ENCODE measurements at regions of chr5 and their contacts with region 1.

Region 1: GRCh38 chr5:55172051-55172899 is 702 bp downstream of the CDC20B start:
- DNase-seq: peak; percentile 79
- H3K4me3 Mint-ChIP-seq: peak overlapping the region; percentile 81
- H3K27ac Mint-ChIP-seq: no peak overlapping the region
- H3K4me1 Mint-ChIP-seq: peaks cover 36% of the 10 kb centered on the region
- H3K27me3 Mint-ChIP-seq: peaks cover 48% of the 10 kb centered on the region

Region 2: GRCh38 chr5:55102348-55102747 is 69.9 kb before region 1 on chr5 and contains the start of gene GZMA:
- CTCF ChIA-PET with region 1: no interaction called
- intact Hi-C with region 1: loop called (anchors 2 kb)
- DNase-seq: peak; percentile 56
- H3K4me3 Mint-ChIP-seq: peak within 1 kb of the TSS; percentile 30
- H3K27ac Mint-ChIP-seq: no peak within 1 kb of the TSS
- H3K4me1 Mint-ChIP-seq: peaks cover 58% of the 10 kb centered on the region
- H3K27me3 Mint-ChIP-seq: peaks cover 9% of the 10 kb centered on the region
- total RNA-seq, gene GZMA: 0.24 TPM in 1 of 2 experiments, not detected in the other

Region 3: DNA sequence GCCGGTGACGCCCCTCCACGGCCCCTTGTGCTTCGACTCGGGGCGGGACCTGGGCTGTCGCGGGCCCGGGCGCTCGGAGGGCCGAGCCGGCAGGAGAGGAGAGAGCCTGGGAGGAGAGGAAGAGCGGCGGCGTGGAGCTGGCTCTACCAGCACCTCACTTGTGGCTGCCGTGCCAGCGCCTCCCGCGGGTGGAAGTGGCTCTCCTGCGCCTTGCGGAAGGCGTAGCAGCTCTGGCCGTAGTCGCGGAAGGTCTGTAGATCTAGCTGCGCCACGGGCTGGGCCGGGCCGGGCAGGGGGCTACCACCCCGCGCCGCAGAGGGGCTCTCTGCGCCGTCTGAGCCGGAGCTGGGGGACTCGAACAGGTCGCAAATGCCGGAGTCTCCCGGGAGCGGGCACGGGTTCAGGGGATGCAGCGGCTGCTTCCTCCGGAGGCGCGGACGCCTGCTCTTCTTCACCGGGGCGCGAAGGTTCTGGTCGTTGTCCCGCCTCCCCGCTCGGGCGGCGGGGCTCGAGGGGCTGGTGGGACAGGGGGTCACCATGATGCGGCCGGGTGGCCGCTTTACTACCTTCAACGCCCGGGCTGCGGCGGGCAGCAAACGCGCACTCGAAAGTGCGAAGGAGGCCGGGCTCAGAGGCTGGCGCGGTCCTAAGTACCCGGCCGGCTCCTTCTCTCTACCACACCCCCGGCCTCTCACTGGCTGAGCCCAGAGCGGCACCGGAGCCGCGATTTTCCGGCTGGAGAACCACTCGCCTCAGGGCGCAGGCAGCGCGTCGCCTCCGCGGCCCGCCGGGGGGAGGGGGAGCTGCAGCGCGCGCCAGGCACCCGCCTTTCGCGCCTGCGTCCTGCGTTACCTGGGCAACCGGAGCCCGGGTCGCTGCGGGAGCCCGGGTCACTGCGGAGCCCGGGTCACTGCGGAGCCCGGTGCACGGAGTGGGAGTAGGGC is 61.0 kb after region 1 on chr5 and contains the start of gene CCNO:
- CTCF ChIA-PET with region 1: interaction called, 10 read pairs
- intact Hi-C with region 1: loop called (anchors 1 kb)
- DNase-seq: peak; percentile 63
- H3K4me3 Mint-ChIP-seq: peak within 1 kb of the TSS; percentile 76
- H3K27ac Mint-ChIP-seq: no peak within 1 kb of the TSS
- H3K4me1 Mint-ChIP-seq: peaks cover 32% of the 10 kb centered on the region
- H3K27me3 Mint-ChIP-seq: peaks cover 69% of the 10 kb centered on the region
- total RNA-seq, gene CCNO: not detected

Region 4: GRCh38 chr5:55407059-55407684 is 234.9 kb after region 1 on chr5:
- CTCF ChIA-PET with region 1: no interaction called
- intact Hi-C with region 1: loop called (anchors 5 kb)
- DNase-seq: peak; percentile 25
- H3K4me3 Mint-ChIP-seq: no peak overlapping the region
- H3K27ac Mint-ChIP-seq: no peak overlapping the region
- H3K4me1 Mint-ChIP-seq: peaks cover 4% of the 10 kb centered on the region
- H3K27me3 Mint-ChIP-seq: no peaks in the 10 kb centered on the region

Region 5: DNA sequence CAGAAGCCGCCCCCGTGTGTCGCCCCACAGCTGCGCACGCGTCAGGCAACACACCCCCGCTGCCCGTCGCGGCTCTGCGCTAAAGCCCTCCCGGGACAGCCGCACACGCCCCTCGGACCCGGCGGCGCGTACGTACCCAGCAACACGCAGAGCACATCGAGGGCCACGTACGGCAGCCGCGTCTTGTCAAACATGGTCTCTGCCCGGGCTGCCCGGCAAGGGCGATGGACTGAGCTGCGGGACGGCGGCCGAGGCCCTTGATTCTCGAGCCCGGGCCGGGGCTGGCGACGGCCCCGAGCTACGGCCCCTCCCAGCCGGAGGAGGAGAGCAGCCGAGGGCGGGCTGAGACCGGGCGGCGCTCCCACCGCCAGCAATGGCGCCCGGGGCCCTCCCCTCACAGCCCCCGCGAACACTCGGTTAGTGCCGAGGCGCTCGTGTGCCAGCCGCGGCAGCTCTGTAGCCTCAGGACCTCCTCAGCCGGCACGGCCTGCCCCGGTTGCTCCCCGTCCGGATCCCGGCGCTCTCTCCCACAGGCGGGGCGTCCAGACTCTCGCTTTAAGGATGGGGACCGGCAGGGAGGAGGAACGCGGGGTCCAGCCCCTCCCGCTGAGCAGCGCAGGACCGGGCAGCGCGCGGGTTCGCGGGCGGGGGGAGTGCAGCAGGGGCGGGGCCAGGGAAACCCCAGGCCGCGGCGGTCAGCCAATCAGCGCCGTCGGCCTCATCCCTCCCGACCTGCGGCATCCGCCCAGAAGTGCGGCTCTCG is 362.3 kb after region 1 on chr5 and contains the start of gene PLPP1:
- CTCF ChIA-PET with region 1: no interaction called
- intact Hi-C with region 1: loop called (anchors 2 kb)
- DNase-seq: peak; percentile 83
- H3K4me3 Mint-ChIP-seq: peak within 1 kb of the TSS; percentile 82
- H3K27ac Mint-ChIP-seq: peak within 1 kb of the TSS; percentile 86
- H3K4me1 Mint-ChIP-seq: peaks cover 29% of the 10 kb centered on the region
- H3K27me3 Mint-ChIP-seq: no peaks in the 10 kb centered on the region
- total RNA-seq, gene PLPP1: 7.3 to 8.3 TPM

Region 6: DNA sequence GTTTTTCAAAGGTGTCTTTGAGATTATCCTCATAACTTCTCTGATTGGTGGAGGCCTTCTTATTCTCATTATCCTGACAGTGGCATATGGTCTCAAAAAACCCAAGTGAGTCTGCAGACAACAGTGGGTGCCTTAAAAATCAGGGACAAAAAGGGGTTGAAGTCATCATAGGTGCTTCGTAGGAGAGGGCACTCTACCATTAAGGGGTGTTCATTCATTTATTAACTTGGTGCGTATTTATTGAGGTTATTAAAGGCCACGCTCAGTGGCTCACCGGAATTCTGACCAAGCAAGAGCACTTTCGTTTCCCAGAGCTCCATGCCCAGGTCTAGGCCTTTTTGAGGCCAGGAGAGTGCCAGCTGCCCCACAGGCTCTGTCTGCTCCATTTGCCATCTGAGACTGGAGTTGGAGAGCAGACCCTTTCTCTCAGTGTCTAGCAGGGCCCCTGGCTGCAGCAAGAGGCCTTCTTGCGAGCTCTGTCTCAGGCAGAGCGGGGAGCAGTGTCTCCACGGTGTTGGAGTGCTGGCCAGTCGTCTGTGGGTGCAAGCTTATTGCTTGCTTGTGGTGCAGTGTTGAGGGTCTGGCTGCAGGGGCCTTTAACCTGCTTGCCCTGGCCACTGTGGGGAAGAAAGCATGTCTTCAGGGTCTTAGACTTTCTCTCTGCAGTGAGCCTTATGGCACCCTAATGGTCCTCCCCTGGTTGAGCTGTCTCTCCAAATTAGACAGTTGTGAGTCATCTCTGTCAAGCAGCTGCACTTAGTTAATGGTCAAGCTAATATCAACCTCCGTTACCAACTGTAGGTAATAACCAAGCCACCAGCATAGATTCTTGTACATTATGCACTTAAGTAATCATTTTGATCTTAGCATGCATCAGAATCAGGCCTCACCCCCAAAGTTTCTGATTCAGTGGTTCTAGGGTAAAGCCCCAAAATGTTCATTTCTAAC is 741.5 kb after region 1 on chr5:
- CTCF ChIA-PET with region 1: no interaction called
- intact Hi-C with region 1: loop called (anchors 5 kb)
- DNase-seq: no peak
- H3K4me3 Mint-ChIP-seq: no peak overlapping the region
- H3K27ac Mint-ChIP-seq: no peak overlapping the region
- H3K4me1 Mint-ChIP-seq: peaks cover 18% of the 10 kb centered on the region
- H3K27me3 Mint-ChIP-seq: no peaks in the 10 kb centered on the region

Region 7: DNA sequence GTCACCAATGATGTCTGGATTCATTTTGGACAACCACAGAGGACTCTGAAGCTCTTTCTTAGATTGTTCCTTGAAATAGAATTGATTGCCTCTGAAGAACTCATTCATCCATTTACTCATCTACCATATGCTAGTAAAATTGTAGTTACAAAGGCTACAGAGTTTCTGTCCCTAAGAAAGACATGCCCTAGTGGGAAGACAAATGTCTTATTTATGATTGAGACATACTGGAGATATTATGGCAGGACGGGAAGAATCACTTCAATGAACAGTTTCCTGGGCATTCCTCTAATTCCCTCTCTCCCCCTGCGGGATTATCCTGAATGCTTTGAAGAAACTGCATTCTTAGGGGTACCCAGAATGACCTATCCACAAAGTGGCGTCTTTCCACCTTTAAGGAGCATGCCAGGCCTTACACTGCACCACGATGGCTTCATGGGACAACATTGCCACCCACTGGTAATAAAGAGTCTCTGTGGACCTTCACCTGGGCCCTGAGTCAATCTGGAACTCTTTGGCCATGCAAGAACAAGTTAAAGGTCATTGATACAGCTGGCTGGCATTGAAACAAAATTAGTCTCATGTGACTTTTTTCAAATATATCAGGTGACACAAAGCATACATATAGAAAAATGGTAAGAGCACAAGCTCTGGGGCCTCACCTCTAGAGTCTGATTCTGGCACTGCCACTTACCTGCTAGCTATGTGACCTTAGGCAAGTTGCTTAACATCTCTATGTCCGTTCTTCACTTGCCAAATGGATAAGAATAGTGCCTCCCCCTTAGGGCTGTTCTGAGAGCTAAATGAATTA is 1028.8 kb after region 1 on chr5:
- CTCF ChIA-PET with region 1: no interaction called
- intact Hi-C with region 1: loop called (anchors 5 kb)
- DNase-seq: peak; percentile 83
- H3K4me3 Mint-ChIP-seq: no peak overlapping the region
- H3K27ac Mint-ChIP-seq: no peak overlapping the region
- H3K4me1 Mint-ChIP-seq: peaks cover 28% of the 10 kb centered on the region
- H3K27me3 Mint-ChIP-seq: no peaks in the 10 kb centered on the region

Measured in activated naive CD4-positive, alpha-beta T cell treated with anti-CD3 and anti-CD28 coated beads for 36 hours (primary cell).